ENCODE measurements at regions of chr1 and their contacts with region 1.

Region 1: DNA sequence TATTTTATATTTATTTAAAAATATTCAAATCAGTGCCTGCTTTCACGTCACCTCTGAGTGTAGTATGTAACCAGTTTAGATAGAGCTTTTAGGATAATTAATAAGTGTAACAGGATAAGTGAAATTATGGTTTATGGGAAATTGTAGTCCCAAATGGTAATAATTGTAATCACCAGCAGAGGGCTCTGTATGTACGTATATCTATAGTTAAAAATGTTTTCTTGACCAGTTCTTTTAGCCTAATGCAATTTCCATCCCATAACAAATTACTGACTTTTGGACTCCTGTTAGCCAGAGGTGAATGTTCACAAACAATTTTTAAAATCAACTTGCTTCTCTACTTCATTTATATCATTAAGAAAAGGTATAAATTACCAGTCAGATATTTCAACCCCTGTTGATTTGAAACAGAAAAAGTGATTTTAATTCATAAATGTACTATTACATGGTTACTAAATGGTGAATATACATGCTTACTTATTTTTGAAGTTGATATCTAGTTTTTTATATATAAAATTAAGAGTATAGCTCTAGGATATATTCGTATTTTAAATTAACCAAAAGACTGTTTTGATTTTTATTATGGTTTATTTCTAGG is 25.3 kb downstream of the SLC30A7 start:
- DNase-seq: no peak
- H3K4me3 Mint-ChIP-seq: no peak overlapping the region
- H3K27ac Mint-ChIP-seq: peak overlapping the region; percentile 39
- H3K4me1 Mint-ChIP-seq: peaks cover 16% of the 10 kb centered on the region
- H3K27me3 Mint-ChIP-seq: no peaks in the 10 kb centered on the region

Region 2: GRCh38 chr1:100834777-100835660 is 86.2 kb before region 1 on chr1:
- CTCF ChIA-PET with region 1: no interaction called
- intact Hi-C with region 1: no loop called
- DNase-seq: no peak
- H3K4me3 Mint-ChIP-seq: no peak overlapping the region
- H3K27ac Mint-ChIP-seq: no peak overlapping the region
- H3K4me1 Mint-ChIP-seq: no peaks in the 10 kb centered on the region
- H3K27me3 Mint-ChIP-seq: no peaks in the 10 kb centered on the region

Region 3: GRCh38 chr1:101506541-101507164 is 585.4 kb after region 1 on chr1:
- CTCF ChIA-PET with region 1: no interaction called
- intact Hi-C with region 1: loop called (anchors 2 kb)
- DNase-seq: peak; percentile 60
- H3K4me3 Mint-ChIP-seq: no peak overlapping the region
- H3K27ac Mint-ChIP-seq: no peak overlapping the region
- H3K4me1 Mint-ChIP-seq: no peaks in the 10 kb centered on the region
- H3K27me3 Mint-ChIP-seq: no peaks in the 10 kb centered on the region

Region 4: DNA sequence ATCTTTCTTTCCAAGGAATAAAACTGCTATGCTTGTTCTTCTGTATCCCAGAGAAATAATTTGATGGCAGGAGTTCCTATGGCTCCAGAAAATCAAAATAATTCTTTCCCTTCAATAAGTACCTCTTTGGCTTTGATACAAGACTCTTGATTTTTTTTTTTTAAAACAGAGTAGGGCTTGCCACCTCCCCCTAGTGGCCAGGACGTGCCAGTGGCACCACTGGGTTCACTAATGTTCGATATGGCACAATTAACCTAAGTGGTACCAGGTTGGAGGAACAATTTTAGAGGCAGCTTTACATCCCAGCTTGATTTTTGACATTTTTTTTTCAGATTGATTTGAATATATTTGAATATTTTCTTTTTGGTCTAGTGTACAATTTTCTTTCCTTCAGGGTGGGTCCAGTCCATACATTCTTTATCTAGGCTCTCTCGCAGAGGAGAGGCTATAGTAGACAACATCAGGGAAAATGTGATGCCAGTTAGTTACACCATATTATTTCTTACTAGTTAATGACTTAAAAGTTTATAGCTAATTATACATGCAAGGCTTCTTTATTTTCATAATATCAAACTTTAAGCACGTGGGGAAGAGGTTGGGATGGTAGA is 646.5 kb after region 1 on chr1:
- CTCF ChIA-PET with region 1: no interaction called
- intact Hi-C with region 1: loop called (anchors 1 kb)
- DNase-seq: peak; percentile 64
- H3K4me3 Mint-ChIP-seq: no peak overlapping the region
- H3K27ac Mint-ChIP-seq: no peak overlapping the region
- H3K4me1 Mint-ChIP-seq: peaks cover 3% of the 10 kb centered on the region
- H3K27me3 Mint-ChIP-seq: peaks cover 2% of the 10 kb centered on the region